AG04449 (cell line): ENCODE measurements at regions of chr19 and their contacts with region 1.

Region 1: GRCh38 chr19:48190288-48190884 is 19.9 kb downstream of the ZSWIM9 start:
- DNase-seq: no peak
- H3K4me3 ChIP-seq: no peak overlapping the region
- CTCF ChIP-seq: no peak

Region 2: GRCh38 chr19:48171710-48172109 is 18.7 kb before region 1 on chr19:
- CTCF ChIA-PET with region 1: interaction called, 11 read pairs
- POLR2A ChIA-PET with region 1: no interaction called
- DNase-seq: no peak
- H3K4me3 ChIP-seq: peak overlapping the region; percentile 89
- CTCF ChIP-seq: no peak

Region 3: GRCh38 chr19:48203732-48204628 is 13.6 kb after region 1 on chr19:
- CTCF ChIA-PET with region 1: interaction called, 44 read pairs
- POLR2A ChIA-PET with region 1: interaction called, 3 read pairs
- DNase-seq: peak; percentile 56
- H3K4me3 ChIP-seq: peak overlapping the region; percentile 91
- CTCF ChIP-seq: no peak

Region 4: DNA sequence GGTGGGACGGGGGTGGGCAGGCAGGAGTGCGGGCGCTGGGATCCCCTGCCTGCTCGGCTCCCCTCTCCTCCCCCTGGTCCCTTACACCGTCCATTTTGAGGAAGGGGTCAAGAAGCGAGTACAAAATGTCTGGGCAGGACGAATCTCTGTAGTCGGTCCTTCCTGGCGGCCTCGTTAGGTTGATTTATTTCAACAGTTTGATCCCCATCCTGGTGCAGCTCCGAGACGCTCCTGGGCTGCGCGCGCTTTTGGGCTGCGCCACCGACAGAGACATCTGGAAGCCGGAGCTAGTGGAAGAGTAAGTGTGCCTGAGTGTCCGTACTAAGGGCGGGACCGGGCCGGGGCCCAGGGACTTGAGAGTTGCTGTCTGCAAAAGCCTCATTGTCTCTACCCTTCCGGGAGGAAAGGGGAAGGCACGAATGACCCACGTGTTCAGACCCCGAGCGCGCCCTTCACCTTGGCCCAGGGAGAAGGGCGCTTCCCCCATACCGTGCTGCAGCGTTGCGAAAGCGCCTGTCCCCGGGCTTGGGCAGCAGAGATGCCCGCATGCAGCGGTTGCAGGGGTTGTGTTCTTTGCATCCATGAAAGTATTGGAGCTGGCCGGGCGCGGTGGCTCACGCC is 81.3 kb after region 1 on chr19:
- CTCF ChIA-PET with region 1: no interaction called
- POLR2A ChIA-PET with region 1: no interaction called
- DNase-seq: no peak
- H3K4me3 ChIP-seq: peak overlapping the region; percentile 58
- CTCF ChIP-seq: no peak